ENCODE measurements at regions of chr9 and their contacts with region 1.

Region 1: GRCh38 chr9:120792898-120793765 is at the start of gene FBXW2:
- DNase-seq: peak; percentile 91
- H3K4me3 Mint-ChIP-seq: peak within 1 kb of the TSS; percentile 91
- H3K27ac Mint-ChIP-seq: peak within 1 kb of the TSS; percentile 90
- H3K4me1 Mint-ChIP-seq: peaks cover 50% of the 10 kb centered on the region
- H3K27me3 Mint-ChIP-seq: no peaks in the 10 kb centered on the region
- total RNA-seq, gene FBXW2: 90.0 to 90.7 TPM

Region 2: DNA sequence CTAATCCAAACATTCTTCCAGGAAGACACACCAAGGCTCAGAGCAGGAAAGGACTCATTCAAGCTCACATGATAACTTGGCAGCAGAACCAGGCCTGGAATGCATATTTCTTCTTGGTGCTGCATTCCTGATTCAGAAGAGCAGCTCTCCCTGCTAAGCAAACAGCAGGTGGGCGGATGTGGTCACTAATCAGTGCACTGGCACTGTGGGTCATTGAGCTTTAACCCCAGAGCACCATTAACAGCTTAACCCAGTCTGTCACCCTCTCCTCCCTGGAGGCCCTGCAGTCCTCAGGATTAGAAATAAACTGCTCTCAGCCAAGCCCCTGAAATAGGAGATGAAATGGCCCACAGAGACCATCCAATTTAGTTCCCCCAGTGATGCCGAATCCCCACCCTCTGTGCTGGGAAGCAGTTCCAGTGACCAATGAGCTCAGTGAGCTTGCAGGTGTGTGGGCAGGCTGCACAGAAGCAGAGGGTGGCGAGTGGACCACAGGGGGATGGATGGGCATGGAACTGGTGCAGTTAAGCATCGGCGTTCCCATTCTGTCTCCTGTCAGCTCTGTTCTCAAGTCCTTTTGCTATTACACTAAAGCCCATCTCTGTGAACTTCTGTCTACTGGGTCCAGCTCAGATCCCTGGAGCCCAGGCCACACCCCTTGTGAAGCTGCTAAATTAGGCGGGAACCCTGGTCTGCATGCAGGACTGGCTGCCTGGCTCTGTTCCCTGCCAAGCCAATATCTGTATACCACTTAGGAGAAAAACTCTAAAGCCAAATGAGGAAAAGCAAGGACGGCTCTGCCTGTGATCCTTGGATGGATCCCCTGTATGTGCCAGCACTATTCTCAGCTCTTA is 62.2 kb before region 1 on chr9:
- CTCF ChIA-PET with region 1: no interaction called
- POLR2A ChIA-PET with region 1: no interaction called
- DNase-seq: no peak
- H3K4me3 Mint-ChIP-seq: no peak overlapping the region
- H3K27ac Mint-ChIP-seq: no peak overlapping the region
- H3K4me1 Mint-ChIP-seq: peaks cover 19% of the 10 kb centered on the region
- H3K27me3 Mint-ChIP-seq: no peaks in the 10 kb centered on the region

Region 3: DNA sequence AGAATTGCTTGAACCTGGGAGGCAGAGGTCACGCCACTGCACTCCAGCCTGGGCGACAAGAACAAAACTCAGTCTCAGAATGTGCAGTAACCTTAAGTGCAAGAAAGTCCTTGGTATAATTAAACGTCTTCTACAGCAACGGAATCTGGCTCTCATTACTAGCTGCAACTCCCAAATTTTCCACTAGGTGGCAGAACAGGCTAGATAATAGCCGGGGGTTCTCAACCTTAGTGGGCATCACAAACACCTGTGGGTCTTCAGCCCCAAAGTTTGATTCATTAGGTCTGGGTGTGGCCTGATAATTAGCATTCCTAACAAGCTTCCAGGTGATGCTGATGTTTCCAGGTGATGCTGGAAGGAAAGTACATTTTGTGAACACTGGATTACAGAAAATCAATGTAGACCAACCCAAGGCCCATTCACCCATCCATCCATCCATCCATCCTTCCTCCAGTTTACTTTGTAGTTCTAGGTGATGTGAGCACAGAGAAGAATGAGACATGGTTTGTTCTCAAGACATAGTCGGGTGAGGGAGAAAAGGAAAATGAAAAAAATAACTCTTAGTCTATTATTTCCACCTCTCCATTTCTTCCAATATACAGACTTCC is 37.2 kb before region 1 on chr9:
- CTCF ChIA-PET with region 1: interaction called, 10 read pairs
- POLR2A ChIA-PET with region 1: interaction called, 4 read pairs
- DNase-seq: peak; percentile 66
- H3K4me3 Mint-ChIP-seq: no peak overlapping the region
- H3K27ac Mint-ChIP-seq: no peak overlapping the region
- H3K4me1 Mint-ChIP-seq: peaks cover 10% of the 10 kb centered on the region
- H3K27me3 Mint-ChIP-seq: no peaks in the 10 kb centered on the region

Region 4: GRCh38 chr9:120778758-120779157 is 14.4 kb before region 1 on chr9:
- CTCF ChIA-PET with region 1: interaction called, 5 read pairs
- POLR2A ChIA-PET with region 1: interaction called, 15 read pairs
- DNase-seq: no peak
- H3K4me3 Mint-ChIP-seq: no peak overlapping the region
- H3K27ac Mint-ChIP-seq: no peak overlapping the region
- H3K4me1 Mint-ChIP-seq: peaks cover 14% of the 10 kb centered on the region
- H3K27me3 Mint-ChIP-seq: no peaks in the 10 kb centered on the region

Region 5: DNA sequence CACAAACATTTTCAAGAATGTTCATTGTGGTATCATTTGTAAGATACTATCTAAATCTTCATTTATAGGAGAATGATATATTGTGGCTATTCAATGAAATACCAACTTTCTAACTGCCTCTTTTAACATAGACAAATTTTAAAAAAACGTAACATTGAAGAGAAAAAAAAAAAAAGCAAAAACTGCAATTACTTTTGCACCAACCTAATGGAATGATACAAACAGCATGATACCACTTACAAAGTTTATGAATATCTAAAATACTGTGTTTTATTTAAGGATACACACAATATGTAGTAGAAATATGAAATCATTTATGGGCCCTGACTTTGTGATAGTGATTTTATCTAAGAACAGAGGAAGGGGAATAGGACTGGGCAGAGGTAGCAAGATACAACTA is 25.5 kb after region 1 on chr9:
- CTCF ChIA-PET with region 1: no interaction called
- POLR2A ChIA-PET with region 1: no interaction called
- DNase-seq: no peak
- H3K4me3 Mint-ChIP-seq: no peak overlapping the region
- H3K27ac Mint-ChIP-seq: no peak overlapping the region
- H3K4me1 Mint-ChIP-seq: peaks cover 2% of the 10 kb centered on the region
- H3K27me3 Mint-ChIP-seq: no peaks in the 10 kb centered on the region

Region 6: DNA sequence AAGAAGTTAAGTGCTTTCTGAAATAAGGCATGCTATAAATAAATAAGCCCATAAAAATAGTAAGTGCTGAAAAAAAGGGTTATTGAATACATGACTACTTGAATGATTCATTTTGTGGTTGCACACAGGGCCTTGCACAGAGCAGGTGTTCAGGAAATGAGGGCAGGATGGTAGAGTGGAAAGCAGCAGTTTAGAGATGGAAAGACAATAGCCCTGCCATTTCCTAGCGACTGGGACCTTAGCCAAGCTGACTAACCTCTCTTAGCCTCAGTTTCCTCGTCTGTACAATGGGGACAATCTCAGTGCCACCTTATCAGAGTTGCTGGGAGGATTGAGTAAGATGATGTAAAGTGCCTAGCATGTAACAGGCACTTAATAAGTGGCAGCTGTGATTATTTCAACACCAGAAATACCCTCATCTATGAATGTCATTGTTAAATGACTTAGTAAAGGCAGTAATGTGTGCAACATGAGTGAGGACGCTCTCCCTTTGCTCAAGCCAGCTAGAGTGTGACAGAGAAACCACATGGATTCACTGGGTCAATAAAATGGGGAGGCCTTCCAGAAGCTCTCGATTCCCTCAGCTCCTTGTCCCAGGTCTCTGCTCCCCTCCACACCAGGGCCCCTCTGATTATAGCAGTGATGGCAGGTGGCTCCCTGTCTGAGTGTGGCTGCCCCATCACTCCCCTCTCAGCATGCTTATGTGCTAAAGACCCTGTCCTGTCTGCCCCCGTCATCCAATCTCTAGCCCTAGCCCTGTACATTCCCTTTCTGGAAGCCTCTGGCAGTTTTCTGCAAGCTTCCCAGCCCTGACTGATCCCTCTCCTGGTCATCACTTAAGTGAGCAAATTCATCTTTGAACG is 99.8 kb after region 1 on chr9:
- CTCF ChIA-PET with region 1: no interaction called
- POLR2A ChIA-PET with region 1: interaction called, 27 read pairs
- DNase-seq: peak; percentile 76
- H3K4me3 Mint-ChIP-seq: peak overlapping the region; percentile 65
- H3K27ac Mint-ChIP-seq: peak overlapping the region; percentile 94
- H3K4me1 Mint-ChIP-seq: peaks cover 90% of the 10 kb centered on the region
- H3K27me3 Mint-ChIP-seq: no peaks in the 10 kb centered on the region

Region 7: GRCh38 chr9:121074635-121075385 is 281.7 kb after region 1 on chr9 and contains the start of gene CNTRL:
- CTCF ChIA-PET with region 1: no interaction called
- POLR2A ChIA-PET with region 1: interaction called, 12 read pairs
- DNase-seq: peak; percentile 93
- H3K4me3 Mint-ChIP-seq: peak within 1 kb of the TSS; percentile 96
- H3K27ac Mint-ChIP-seq: peak within 1 kb of the TSS; percentile 91
- H3K4me1 Mint-ChIP-seq: peaks cover 53% of the 10 kb centered on the region
- H3K27me3 Mint-ChIP-seq: no peaks in the 10 kb centered on the region
- total RNA-seq, gene CNTRL: 84.1 to 86.9 TPM

Measured in activated CD4-positive, alpha-beta memory T cell treated with anti-CD3 and anti-CD28 coated beads, Interleukin-2, amount 10 ng/mL, durations not matched to agents 7 days and 5 days (primary cell).